AG04449 (cell line): ENCODE measurements at regions of chr11 and their contacts with region 1.

Region 1: DNA sequence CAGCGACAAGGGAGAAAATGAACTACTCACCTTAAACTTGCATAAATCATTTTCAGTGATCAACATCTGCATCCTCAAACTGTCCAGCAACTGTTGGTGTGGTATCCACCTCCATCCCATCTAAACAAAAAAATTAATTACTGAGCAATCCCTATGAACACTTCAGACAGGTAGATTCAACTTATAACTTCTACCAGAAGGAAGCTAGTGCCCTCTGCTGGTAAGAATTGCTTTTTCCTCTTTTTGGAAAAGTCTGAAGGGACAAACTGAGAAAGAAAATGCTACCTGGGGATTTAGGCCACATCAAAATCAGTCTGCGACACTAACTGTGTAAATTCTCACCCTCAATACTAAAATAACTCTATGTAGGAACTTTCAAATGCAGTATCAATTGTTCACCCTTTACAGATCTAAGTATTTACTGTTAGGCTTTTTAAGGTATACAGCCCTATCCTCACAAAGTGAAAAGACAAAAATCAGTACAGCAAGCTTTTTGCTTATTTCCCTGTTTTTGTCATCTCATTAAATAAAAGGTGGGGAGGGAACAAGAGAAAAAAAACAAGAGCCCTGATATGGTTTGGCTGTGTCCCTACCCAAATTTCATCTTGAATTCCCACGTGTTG is 17.9 kb downstream of the CLNS1A start:
- DNase-seq: no peak
- H3K4me3 ChIP-seq: no peak overlapping the region
- CTCF ChIP-seq: peak; percentile 57

Region 2: DNA sequence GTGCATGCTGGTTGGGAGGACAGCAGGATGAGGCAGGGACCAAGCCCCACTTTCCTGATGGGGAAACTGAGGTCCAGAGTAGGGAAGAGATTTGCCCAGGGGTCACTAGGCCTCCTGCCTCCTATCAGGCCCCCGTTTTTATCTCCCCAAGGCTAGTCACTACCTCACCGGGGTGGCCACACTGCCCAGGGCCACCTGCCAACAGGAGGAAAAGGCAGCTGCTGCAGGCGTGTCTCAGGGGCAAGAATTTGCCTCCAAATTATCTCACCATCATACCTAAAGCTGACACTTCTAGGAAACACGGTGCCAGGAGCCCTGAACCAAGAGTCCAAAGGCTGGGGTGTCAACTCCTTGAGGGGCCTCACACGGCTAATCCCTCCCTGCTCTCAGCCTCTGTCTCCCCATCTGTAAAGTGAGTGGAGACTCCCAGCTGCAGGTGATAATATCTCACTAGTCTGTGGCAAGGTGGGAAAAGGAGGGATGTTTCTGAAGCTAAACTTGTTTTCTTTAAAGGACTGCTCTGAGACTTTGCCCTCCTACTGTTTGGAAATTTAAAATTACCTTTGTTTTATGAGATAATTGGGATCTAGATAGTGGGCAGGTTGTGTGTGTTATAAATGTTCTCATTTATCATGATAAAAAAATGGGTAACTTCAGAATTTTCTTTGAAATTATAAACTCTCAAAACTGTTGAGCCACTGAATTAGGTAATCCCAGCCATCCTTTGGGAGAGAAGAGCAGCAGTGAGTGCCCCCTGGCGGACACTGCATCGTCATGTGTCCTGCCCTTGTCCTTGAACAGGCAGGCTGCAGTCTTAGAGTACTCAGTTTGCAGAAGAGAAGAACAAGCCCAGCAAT is 431.7 kb before region 1 on chr11:
- CTCF ChIA-PET with region 1: interaction called, 17 read pairs
- POLR2A ChIA-PET with region 1: no interaction called
- DNase-seq: peak; percentile 21
- H3K4me3 ChIP-seq: no peak overlapping the region
- CTCF ChIP-seq: peak; percentile 86

Region 3: GRCh38 chr11:77471558-77472193 is 148.0 kb before region 1 on chr11:
- CTCF ChIA-PET with region 1: interaction called, 10 read pairs
- POLR2A ChIA-PET with region 1: no interaction called
- DNase-seq: no peak
- H3K4me3 ChIP-seq: no peak overlapping the region
- CTCF ChIP-seq: no peak

Region 4: GRCh38 chr11:77602381-77603088 is 17.2 kb before region 1 on chr11:
- CTCF ChIA-PET with region 1: interaction called, 26 read pairs
- POLR2A ChIA-PET with region 1: interaction called, 3 read pairs
- DNase-seq: peak; percentile 59
- H3K4me3 ChIP-seq: no peak overlapping the region
- CTCF ChIP-seq: no peak

Region 5: DNA sequence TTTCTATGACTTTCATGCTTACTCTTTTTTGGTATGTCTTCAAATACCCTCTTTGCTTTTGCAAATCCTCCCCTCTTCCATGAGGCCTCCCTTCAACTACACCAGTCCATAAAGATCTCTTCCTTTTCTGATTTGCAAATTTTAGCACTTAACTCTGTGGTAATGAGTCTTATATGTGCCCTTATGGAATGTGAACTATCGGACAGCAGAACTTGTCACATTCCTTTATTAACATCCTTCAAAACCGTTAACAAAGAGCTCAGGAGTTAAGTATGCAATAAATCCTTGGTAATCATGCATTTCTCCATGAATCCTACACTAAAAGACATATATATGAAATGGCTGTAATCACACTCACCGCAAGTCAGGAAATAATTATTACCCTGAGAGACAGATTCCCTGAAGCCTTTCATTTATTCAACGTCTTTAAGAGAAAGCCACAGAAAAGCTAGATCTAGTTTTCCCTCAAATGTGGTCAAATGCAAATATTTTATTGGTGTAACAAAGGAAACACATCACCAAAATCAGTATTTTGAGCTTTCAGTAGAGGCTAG is 10.5 kb after region 1 on chr11:
- CTCF ChIA-PET with region 1: interaction called, 58 read pairs
- POLR2A ChIA-PET with region 1: no interaction called
- DNase-seq: no peak
- H3K4me3 ChIP-seq: no peak overlapping the region
- CTCF ChIP-seq: no peak